ENCODE measurements at regions of chr9 and their contacts with region 1.

Region 1: GRCh38 chr9:92954049-92954861 is 6.9 kb downstream of the FGD3 start:
- DNase-seq: peak; percentile 51 to 54
- H3K4me3 ChIP-seq: peak overlapping the region in 1 of 3 donors; percentile 35
- H3K27ac ChIP-seq: peak overlapping the region; percentile 27 to 54
- H3K4me1 ChIP-seq: no peaks in the 10 kb centered on the region
- H3K27me3 ChIP-seq: no peaks in the 10 kb centered on the region
- CTCF ChIP-seq: no peak
- POLR2A ChIP-seq: no peak

Region 2: GRCh38 chr9:92439921-92440750 is 514.1 kb before region 1 on chr9:
- intact Hi-C with region 1: loop called (anchors 10 kb)
- DNase-seq: no peak
- H3K4me3 ChIP-seq: no peak overlapping the region
- H3K27ac ChIP-seq: no peak overlapping the region
- H3K4me1 ChIP-seq: no peaks in the 10 kb centered on the region
- H3K27me3 ChIP-seq: no peaks in the 10 kb centered on the region
- CTCF ChIP-seq: no peak
- POLR2A ChIP-seq: no peak

Region 3: DNA sequence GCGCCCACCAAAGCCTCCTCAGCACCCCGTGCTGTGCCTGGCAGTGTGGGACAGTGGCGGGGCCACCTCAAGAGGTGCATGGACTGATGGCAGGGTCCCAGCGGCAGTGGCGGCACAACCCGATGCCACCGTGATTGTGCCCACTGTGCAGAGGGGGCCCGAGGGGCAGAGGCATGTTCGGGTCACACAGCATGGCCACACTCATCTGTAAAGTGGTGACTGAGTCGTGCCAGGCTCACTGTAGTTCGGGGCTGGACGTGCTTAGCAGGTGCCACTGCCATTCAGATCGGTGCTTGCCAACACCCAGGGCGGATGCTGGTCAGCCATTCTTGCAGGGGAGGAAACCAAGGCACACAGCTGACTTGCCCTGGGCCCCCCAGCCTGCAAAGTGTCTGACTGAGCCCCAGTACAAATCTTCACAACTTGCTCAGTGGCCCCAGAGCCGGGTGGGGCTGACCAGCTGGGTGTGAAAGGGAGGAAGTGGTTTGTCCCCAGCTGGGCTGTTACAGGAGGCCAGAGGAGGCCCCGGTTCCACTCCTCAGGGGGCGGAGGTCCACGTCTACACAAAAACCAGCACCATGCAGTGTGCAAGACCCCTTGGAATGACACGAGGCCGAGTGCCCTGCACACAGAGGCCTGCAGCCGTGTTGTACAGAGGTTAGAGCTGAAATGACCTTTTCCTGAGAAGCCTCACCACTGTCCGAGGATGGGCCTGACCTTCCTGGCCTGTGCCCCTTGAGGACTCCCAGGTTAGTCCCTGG is 10.9 kb after region 1 on chr9:
- intact Hi-C with region 1: no loop called
- DNase-seq: peak in 1 of 2 donors; percentile 37
- H3K4me3 ChIP-seq: peak overlapping the region; percentile 35 to 50 (median 41)
- H3K27ac ChIP-seq: peak overlapping the region in 1 of 2 donors; percentile 10
- H3K4me1 ChIP-seq: no peaks in the 10 kb centered on the region
- H3K27me3 ChIP-seq: no peaks in the 10 kb centered on the region
- CTCF ChIP-seq: no peak
- POLR2A ChIP-seq: no peak